Ascending aorta (tissue), 2 donors: ENCODE measurements at regions of chr2 and their contacts with region 1.

Region 1: DNA sequence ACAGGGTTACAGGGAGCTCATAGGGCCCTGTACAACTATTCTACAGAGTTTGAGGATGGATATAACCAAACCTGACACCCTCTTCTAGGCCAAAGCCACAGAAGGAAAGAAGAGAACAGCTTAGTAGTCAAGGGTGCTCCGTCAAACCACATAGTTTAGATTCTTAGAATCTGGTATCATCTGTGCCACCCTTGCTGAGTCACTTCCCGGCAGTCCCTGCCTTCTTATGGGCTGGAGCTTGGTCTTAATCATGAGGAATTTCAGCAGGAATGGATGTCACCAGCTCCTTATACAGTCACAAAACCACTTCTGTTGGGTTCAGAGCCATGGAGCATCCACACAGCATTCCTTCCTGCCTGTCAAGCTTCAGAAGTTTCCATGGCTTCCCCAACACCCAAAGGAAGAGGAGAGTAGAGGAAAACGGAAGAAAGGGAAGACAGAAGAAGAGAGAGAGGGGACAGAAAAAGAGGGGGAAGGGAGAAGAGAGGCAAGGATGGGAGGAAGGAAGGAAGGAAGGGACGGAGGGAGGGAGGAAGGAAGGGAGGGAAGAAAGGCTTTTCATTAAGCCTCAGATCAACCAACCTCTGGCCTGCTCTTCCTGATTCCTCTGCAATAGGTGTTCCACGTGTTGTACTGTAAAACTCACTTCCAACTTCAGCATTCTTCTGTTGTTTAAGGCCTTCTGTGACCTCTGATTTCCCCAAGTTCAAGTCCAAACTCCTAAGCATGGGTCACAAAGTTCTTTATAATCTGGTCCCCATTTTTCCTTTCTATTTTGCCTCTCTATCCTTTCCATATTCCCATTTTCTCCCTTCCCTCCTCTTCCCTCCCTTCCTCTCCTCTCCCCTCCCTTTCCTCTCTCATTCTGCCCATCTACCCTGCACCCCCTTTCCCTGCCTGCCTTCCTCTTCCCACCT is 246.1 kb upstream of the TNP1 start:
- DNase-seq: peak; percentile 48 to 93
- H3K4me3 ChIP-seq: no peak overlapping the region
- H3K27ac ChIP-seq: peak overlapping the region; percentile 82 to 86
- H3K4me1 ChIP-seq: peaks cover 3 to 18% of the 10 kb centered on the region in 2 donors
- H3K27me3 ChIP-seq: no peaks in the 10 kb centered on the region
- CTCF ChIP-seq: no peak

Region 2: DNA sequence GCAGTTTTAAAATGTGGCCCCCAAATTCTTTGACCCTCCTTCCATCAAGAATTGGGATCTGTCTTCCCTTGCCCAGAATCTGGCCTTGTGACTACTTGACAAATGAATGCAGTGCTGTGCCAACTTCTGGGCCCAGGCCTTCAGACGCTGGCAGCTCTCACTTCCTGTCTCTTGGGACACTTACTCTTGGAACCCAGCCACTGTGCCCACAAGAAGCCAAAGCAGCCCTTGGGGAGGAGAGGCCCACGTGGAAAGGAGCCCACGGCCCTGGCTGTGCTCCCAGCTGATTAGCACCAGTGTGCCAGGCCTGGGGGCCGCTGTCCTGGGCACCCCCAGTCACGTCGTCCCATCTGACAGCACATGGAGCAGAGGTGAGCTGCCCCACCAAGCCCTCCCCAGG is 550.7 kb before region 1 on chr2:
- intact Hi-C with region 1: loop called (anchors 10 kb)
- DNase-seq: peak; percentile 72 to 93
- H3K4me3 ChIP-seq: peak overlapping the region in 1 of 2 donors; percentile 5
- H3K27ac ChIP-seq: peak overlapping the region; percentile 64 to 85
- H3K4me1 ChIP-seq: peaks cover 27 to 73% of the 10 kb centered on the region in 2 donors
- H3K27me3 ChIP-seq: no peaks in the 10 kb centered on the region
- CTCF ChIP-seq: no peak

Region 3: GRCh38 chr2:216974321-216975302 is 131.4 kb before region 1 on chr2:
- intact Hi-C with region 1: loop called (anchors 2 kb)
- DNase-seq: peak in 1 of 2 donors; percentile 77
- H3K4me3 ChIP-seq: no peak overlapping the region
- H3K27ac ChIP-seq: peak overlapping the region; percentile 85
- H3K4me1 ChIP-seq: peaks cover 7 to 52% of the 10 kb centered on the region in 2 donors
- H3K27me3 ChIP-seq: no peaks in the 10 kb centered on the region
- CTCF ChIP-seq: no peak

Region 4: DNA sequence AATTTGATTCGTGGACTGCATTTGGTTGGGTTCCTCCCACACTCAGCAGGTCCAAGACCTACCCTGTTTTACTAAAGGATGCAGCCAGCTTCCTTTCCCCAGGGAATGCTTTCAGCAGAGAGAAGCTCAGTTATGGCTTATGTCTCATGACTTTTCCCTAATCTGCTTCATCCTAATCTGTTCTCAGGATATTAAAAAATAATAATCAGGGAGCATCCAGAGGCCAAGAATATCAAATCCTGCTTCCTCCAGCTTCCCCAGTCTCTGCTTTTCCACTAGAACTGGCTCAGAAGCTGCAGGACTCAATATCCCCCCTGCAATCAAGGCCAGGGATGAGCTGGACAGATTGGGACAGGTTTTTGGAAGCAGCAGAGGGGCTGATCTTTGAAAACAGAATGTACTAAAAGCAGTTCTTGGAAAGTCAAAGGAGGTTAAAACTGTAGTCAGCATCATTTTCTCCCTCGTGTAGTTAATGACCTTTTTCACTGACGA is 80.7 kb after region 1 on chr2:
- intact Hi-C with region 1: loop called (anchors 2 kb)
- DNase-seq: peak in 1 of 2 donors; percentile 69
- H3K4me3 ChIP-seq: no peak overlapping the region
- H3K27ac ChIP-seq: peak overlapping the region; percentile 76 to 80
- H3K4me1 ChIP-seq: peaks cover 11 to 45% of the 10 kb centered on the region in 2 donors
- H3K27me3 ChIP-seq: no peaks in the 10 kb centered on the region
- CTCF ChIP-seq: no peak

Region 5: GRCh38 chr2:217360781-217361482 is 254.9 kb after region 1 on chr2:
- intact Hi-C with region 1: loop called (anchors 2 kb)
- DNase-seq: peak in 1 of 2 donors; percentile 83
- H3K4me3 ChIP-seq: peak overlapping the region in 1 of 2 donors; percentile 10
- H3K27ac ChIP-seq: peak overlapping the region; percentile 83 to 86
- H3K4me1 ChIP-seq: peaks cover 18 to 58% of the 10 kb centered on the region in 2 donors
- H3K27me3 ChIP-seq: no peaks in the 10 kb centered on the region
- CTCF ChIP-seq: no peak